ENCODE measurements at regions of chr13 and their contacts with region 1.

Region 1: DNA sequence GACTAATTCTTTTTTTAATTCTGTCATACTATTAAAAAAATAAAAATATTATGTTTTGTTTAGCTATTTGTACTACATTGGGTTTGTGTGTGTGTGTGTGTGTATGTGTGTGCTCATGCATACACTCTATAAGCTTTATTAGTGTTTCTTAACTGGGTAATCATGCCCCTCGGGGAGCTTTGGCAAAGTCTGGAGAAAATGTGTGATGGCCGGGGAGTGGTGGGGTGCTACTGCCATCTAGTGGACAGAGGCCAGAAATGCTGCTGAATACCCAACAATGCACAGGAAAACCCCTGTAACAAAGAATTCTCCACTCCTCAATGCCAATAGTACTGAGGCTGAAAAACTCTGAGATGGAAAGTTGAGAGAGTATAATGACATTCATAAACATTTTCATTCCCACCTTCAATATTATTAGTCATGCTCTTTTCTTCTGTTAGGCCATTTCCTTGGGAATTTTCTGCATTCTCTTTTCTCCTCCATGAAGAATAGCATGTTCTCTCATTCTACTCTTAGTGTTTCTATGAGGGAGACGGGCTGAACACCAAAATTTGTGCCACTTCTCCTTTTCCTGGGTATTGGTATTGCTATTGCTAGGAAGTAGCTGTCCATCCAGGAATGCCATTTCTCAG is 157.3 kb downstream of the DNAJC3 start:
- DNase-seq: peak; percentile 77
- H3K4me3 Mint-ChIP-seq: no peak overlapping the region
- H3K27ac Mint-ChIP-seq: no peak overlapping the region
- H3K4me1 Mint-ChIP-seq: no peaks in the 10 kb centered on the region
- H3K27me3 Mint-ChIP-seq: peaks cover 22% of the 10 kb centered on the region

Region 2: DNA sequence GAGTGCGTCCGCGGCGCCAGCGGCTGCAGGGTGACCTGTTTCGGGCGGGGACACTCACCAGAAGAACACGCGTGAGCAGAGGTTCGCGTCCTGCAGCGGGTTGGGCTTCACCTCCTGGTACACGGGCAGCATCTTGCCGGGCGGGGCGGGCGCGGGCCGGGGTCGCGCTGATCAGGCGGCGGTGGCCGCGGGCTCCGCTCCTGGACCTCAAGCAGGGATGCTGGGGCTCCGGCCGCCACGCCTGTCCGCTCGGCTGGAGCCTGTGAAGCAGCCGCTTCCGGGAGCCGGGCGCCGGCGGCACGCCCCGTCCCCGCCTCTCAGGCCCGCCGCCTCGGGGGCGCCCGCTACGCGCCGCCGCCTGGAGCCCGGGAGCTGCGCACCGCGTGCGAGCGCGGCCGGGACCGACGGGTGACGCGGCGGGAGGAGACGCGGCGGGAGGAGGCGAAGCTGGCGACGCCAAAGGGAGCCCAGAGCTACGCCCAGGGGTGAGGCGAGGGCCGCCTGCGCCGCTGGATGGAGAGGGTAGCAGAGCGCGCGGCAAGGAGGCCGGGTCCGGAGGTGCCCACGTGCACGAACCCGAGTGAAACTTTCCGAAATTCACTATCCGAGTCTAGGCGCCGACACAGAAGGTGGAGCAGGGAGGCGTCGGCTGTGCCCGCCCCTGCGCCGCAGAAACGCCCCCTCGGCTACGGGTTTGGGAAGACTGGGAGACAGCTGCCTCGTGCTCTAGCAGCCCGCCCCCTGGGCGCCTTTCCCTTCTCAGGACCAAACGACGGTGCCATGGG is 532.9 kb before region 1 on chr13 and contains the start of gene ABCC4:
- CTCF ChIA-PET with region 1: no interaction called
- intact Hi-C with region 1: loop called (anchors 5 kb)
- DNase-seq: peak; percentile 53
- H3K4me3 Mint-ChIP-seq: peak within 1 kb of the TSS; percentile 80
- H3K27ac Mint-ChIP-seq: peak within 1 kb of the TSS; percentile 51
- H3K4me1 Mint-ChIP-seq: peaks cover 39% of the 10 kb centered on the region
- H3K27me3 Mint-ChIP-seq: peaks cover 7% of the 10 kb centered on the region
- total RNA-seq, gene ABCC4: 8.0 to 8.1 TPM

Region 3: DNA sequence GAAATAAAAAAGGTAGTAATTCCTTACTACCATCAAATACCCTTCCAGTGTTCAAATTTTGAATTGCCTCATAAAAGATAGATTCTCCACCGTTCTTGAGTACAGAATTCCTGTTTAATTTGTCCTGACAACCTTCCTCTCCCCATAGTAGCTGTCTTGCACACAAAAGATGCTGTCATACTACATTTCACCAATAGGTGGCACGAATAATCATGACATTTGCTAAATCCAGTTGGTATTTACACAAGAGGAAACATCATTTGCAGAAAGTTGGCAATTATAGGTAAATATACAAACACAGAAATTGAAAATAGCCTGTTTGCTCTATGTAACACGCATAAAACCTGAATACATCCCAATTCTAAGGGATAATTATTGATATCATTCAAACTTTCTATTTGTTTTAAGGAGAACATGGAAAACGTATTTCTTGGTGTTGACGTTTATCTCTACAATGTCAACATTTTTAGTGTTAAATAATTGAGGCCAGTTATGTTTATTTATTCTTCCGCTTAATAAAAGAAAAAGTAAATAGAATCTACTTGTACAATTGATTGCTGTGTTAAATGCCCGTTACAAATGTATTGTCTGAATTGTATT is 340.1 kb before region 1 on chr13:
- CTCF ChIA-PET with region 1: interaction called, 9 read pairs
- intact Hi-C with region 1: loop called (anchors 1 kb)
- DNase-seq: no peak
- H3K4me3 Mint-ChIP-seq: no peak overlapping the region
- H3K27ac Mint-ChIP-seq: no peak overlapping the region
- H3K4me1 Mint-ChIP-seq: no peaks in the 10 kb centered on the region
- H3K27me3 Mint-ChIP-seq: peaks cover 12% of the 10 kb centered on the region

Region 4: GRCh38 chr13:95552539-95553441 is 281.5 kb before region 1 on chr13 and contains the start of gene CLDN10:
- CTCF ChIA-PET with region 1: no interaction called
- intact Hi-C with region 1: loop called (anchors 5 kb)
- DNase-seq: no peak
- H3K4me3 Mint-ChIP-seq: peak within 1 kb of the TSS; percentile 32
- H3K27ac Mint-ChIP-seq: no peak within 1 kb of the TSS
- H3K4me1 Mint-ChIP-seq: peaks cover 12% of the 10 kb centered on the region
- H3K27me3 Mint-ChIP-seq: peaks cover 61% of the 10 kb centered on the region
- total RNA-seq, gene CLDN10: not detected

Region 5: DNA sequence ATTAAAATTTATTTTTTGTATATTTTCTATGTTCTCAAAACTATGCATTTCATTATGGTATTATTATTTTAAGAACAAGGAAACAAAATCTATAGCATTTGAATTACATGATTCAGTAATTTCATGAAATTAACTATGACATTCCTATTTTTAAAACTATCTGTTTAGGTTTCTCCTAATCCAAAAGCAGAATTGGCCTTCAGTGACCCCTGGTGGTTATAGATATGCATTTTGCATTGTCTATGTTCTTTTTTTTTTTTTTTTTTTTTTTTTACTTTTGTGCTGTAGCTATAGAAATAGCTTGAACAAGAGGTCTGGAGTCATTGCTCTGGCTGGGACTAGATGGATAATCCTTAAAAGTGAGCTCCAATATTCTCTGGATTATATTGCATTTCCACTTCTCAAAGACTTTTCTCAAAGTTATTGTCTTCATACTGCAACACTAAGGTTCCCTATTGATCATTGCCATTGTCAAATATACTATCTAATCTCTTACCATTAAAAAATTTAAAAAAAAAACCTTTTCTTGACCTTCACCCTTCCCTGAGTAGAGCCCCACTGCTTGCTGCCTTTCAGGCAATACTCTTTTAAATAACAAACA is 173.2 kb before region 1 on chr13:
- CTCF ChIA-PET with region 1: interaction called, 9 read pairs
- intact Hi-C with region 1: loop called (anchors 1 kb)
- DNase-seq: peak; percentile 36
- H3K4me3 Mint-ChIP-seq: no peak overlapping the region
- H3K27ac Mint-ChIP-seq: no peak overlapping the region
- H3K4me1 Mint-ChIP-seq: no peaks in the 10 kb centered on the region
- H3K27me3 Mint-ChIP-seq: peaks cover 12% of the 10 kb centered on the region

Region 6: GRCh38 chr13:95698047-95698749 is 136.1 kb before region 1 on chr13:
- CTCF ChIA-PET with region 1: no interaction called
- intact Hi-C with region 1: no loop called
- DNase-seq: no peak
- H3K4me3 Mint-ChIP-seq: no peak overlapping the region
- H3K27ac Mint-ChIP-seq: no peak overlapping the region
- H3K4me1 Mint-ChIP-seq: peaks cover 50% of the 10 kb centered on the region
- H3K27me3 Mint-ChIP-seq: no peaks in the 10 kb centered on the region

Region 7: DNA sequence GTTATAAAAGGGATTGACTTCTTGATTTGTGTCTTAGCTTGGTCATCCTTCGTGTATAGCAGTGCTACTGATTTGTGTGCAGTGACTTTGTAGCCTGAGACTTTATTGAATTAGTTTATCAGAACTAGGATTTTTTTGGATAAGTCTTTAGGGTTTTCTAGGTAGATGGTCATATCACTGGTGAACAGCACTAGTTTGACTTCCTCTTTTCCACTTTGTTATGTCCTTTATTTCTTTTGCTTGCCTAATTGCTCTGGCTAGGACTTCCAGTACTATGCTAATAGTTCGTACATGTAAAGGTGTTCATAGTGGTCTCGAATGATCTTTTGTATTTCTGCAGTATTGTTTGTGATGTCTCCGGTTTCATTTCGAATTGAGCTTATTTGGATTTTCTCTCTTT is 11.9 kb before region 1 on chr13:
- CTCF ChIA-PET with region 1: interaction called, 28 read pairs
- intact Hi-C with region 1: no loop called
- DNase-seq: no peak
- H3K4me3 Mint-ChIP-seq: no peak overlapping the region
- H3K27ac Mint-ChIP-seq: no peak overlapping the region
- H3K4me1 Mint-ChIP-seq: no peaks in the 10 kb centered on the region
- H3K27me3 Mint-ChIP-seq: peaks cover 21% of the 10 kb centered on the region

Region 8: DNA sequence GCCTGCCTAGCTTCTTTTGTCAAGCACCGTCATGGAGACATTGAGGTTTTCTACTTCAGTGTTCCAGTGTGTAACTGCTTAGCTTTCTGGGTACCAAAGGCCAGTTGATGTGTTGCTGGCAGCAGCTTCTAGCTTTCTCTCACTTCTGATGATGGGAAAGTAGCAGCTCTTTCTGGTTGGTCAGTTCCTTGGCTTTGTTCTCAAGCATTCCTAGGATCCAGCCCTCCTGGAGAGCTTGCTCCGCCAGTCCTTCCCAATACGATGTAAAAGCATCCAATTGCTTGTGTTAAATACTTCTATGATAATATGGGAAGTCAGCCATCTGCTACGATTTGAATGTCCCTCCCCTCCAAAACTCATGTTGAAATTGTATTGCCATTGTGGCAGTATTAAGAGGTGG is 36.2 kb after region 1 on chr13:
- CTCF ChIA-PET with region 1: no interaction called
- intact Hi-C with region 1: no loop called
- DNase-seq: no peak
- H3K4me3 Mint-ChIP-seq: no peak overlapping the region
- H3K27ac Mint-ChIP-seq: no peak overlapping the region
- H3K4me1 Mint-ChIP-seq: no peaks in the 10 kb centered on the region
- H3K27me3 Mint-ChIP-seq: peaks cover 12% of the 10 kb centered on the region

Region 9: DNA sequence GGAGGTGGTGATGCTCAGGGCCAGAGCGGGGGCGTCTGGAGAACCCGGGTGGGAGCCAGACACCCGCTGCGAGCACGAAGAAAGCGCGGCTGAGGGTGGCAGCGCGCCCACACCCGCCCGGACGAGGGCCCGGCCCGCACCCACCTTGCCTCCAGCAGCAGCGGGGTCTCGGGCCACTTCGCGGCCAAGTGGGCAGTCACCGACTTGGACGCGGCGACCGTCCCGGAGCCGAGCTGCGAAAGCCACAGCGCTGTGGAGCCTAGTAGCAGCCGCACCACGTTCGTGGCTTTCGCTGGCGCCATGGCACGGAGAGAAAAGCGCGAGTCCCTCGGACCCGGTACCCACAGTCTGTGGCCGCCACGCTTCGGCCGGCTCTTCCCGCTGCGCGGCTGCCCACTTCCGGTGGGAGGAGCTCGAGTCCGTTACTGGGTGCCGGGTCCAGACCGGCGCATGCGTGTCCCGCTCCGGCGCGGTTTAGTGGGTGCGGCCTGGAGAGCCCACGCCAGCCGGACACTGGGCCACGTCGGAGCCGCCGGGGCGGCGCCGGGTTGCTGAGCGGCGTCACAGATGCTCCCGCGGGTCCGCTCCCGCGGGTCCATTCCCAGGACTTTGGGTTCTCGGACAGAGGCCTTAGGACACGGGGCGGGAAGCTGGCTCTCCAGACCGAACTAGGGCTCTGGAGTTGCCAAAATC is 218.9 kb after region 1 on chr13 and contains the start of gene UGGT2:
- CTCF ChIA-PET with region 1: no interaction called
- intact Hi-C with region 1: no loop called
- DNase-seq: no peak
- H3K4me3 Mint-ChIP-seq: peak within 1 kb of the TSS; percentile 12
- H3K27ac Mint-ChIP-seq: no peak within 1 kb of the TSS
- H3K4me1 Mint-ChIP-seq: peaks cover 7% of the 10 kb centered on the region
- H3K27me3 Mint-ChIP-seq: peaks cover 48% of the 10 kb centered on the region
- total RNA-seq, gene UGGT2: 0.12 TPM in 1 of 2 experiments, not detected in the other

Region 10: DNA sequence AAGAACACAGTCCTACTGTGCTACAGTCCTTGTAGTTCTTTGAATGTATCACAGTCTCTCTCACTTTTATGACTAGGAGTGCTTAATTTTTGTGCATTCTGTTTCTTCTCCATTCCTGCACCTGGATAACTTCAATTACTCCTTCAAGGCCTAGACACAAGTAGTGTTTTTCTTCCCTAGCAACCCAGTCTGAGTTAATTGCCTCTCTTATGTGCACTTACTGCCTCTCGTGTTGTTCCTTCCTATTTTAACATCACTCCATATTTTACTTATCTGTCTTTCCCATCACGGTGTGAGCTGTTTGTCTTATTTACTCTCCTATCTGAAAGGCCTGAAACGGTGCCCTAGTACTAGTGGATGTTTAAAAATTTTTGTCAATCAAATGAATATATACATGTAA is 357.1 kb after region 1 on chr13:
- CTCF ChIA-PET with region 1: no interaction called
- intact Hi-C with region 1: no loop called
- DNase-seq: no peak
- H3K4me3 Mint-ChIP-seq: no peak overlapping the region
- H3K27ac Mint-ChIP-seq: no peak overlapping the region
- H3K4me1 Mint-ChIP-seq: no peaks in the 10 kb centered on the region
- H3K27me3 Mint-ChIP-seq: no peaks in the 10 kb centered on the region